ENCODE measurements at regions of chr12 and their contacts with region 1.

Region 1: DNA sequence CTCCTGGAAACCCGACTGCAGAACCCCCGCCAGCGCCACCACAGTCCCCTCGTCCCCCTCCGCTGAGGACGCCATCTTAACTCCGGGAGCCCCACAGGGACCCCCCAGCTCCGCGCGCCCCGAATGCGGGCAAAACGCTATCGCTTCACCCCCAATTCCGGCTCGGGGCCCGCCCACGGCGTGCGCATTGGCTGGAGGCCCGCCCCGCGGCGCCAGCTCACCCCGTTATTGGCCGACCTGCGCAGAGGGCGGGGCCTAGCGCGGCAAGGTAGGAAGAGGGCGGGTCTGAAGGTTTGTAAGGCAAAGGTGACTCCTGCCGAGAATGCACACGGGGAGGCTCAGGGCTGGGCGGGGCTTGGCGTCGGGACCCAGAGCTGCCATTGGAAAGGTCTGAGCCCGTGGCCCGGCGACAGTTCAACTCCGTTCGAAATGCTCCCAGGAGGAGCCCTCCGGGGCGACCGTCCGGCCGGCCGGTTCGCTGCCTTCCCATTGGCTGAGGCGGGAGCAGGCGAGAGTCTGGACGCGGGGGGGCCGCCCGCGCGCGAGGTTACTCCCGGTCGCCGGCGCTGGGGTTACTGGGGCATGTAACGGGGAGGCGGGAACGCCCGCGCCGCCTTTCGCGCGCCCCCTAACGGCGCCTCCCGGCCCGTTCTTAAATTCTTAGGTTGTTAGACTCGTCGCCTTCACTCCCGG is at the start of gene LPCAT3:
- DNase-seq: peak; percentile 98 to 100
- ATAC-seq: peak; percentile 98
- H3K4me3 ChIP-seq: peak within 1 kb of the TSS; percentile 19 to 62
- H3K27ac ChIP-seq: peak within 1 kb of the TSS; percentile 10 to 96
- H3K4me1 ChIP-seq: peaks cover 0 to 4% of the 10 kb centered on the region in 2 donors
- H3K27me3 ChIP-seq: no peaks in the 10 kb centered on the region
- total RNA-seq, gene LPCAT3: 28.8 to 33.2 TPM

Region 2: DNA sequence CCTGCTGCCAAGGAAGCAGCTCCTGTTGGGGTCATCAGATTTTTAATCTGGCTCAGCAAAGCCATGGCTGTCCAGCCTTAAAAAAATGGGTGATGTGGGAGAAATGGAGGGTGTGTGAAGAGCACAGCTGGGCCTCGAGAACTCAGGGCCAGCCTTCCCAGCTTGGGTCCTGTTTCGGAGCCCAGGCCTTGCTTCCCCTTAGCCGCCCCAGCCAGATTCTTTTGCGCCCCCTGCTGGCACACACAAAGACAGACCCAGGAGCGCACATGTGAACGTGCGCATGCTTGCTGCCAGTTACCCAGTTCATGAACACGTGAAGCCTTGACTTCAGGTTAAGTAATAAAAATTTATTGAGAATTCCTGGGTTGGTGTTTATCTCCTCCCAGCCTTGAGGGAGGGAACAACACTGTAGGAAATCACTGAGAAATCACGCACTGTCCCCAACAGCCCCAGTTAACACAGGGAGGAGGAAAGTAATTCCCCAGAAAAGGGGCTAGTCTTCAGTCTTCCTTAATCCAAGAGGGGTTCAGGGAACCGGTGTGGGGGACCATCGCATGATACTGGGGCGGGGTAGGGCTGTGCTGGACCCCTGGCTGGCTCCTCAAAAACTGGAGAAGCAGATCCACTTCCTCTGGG is 53.4 kb before region 1 on chr12:
- intact Hi-C with region 1: loop called in 1 of 2 experiments (anchors 5 kb)
- DNase-seq: peak; percentile 94
- ATAC-seq: peak; percentile 84
- H3K4me3 ChIP-seq: no peak overlapping the region
- H3K27ac ChIP-seq: peak overlapping the region in 1 of 2 donors; percentile 41
- H3K4me1 ChIP-seq: peaks cover 4 to 5% of the 10 kb centered on the region in 2 donors
- H3K27me3 ChIP-seq: no peaks in the 10 kb centered on the region

Region 3: GRCh38 chr12:6973986-6974615 is 44.4 kb before region 1 on chr12:
- intact Hi-C with region 1: loop called (anchors 2 to 5 kb)
- DNase-seq: no peak
- ATAC-seq: no peak
- H3K4me3 ChIP-seq: no peak overlapping the region
- H3K27ac ChIP-seq: no peak overlapping the region
- H3K4me1 ChIP-seq: peaks cover 3% of the 10 kb centered on the region in 2 donors
- H3K27me3 ChIP-seq: no peaks in the 10 kb centered on the region

Region 4: GRCh38 chr12:7092229-7092985 is 73.9 kb after region 1 on chr12 and contains the start of gene C1R:
- intact Hi-C with region 1: loop called in 1 of 2 experiments (anchors 10 kb)
- DNase-seq: peak; percentile 89 to 92
- ATAC-seq: peak; percentile 86
- H3K4me3 ChIP-seq: peak within 1 kb of the TSS; percentile 44 to 51
- H3K27ac ChIP-seq: peak within 1 kb of the TSS in 1 of 2 donors; percentile 65
- H3K4me1 ChIP-seq: no peaks in the 10 kb centered on the region
- H3K27me3 ChIP-seq: no peaks in the 10 kb centered on the region
- total RNA-seq, gene C1R: 769 to 1,570 TPM

Measured in aorta (tissue), 5 donors.